ENCODE measurements at regions of chr12 and their contacts with region 1.

Region 1: GRCh38 chr12:98516184-98516873 is 939 bp downstream of the TMPO start:
- DNase-seq: peak; percentile 94
- ATAC-seq: peak; percentile 76
- H3K4me3 Mint-ChIP-seq: peak overlapping the region; percentile 87
- H3K27ac Mint-ChIP-seq: peak overlapping the region; percentile 96
- H3K4me1 Mint-ChIP-seq: peaks cover 34% of the 10 kb centered on the region
- H3K27me3 Mint-ChIP-seq: no peaks in the 10 kb centered on the region

Region 2: DNA sequence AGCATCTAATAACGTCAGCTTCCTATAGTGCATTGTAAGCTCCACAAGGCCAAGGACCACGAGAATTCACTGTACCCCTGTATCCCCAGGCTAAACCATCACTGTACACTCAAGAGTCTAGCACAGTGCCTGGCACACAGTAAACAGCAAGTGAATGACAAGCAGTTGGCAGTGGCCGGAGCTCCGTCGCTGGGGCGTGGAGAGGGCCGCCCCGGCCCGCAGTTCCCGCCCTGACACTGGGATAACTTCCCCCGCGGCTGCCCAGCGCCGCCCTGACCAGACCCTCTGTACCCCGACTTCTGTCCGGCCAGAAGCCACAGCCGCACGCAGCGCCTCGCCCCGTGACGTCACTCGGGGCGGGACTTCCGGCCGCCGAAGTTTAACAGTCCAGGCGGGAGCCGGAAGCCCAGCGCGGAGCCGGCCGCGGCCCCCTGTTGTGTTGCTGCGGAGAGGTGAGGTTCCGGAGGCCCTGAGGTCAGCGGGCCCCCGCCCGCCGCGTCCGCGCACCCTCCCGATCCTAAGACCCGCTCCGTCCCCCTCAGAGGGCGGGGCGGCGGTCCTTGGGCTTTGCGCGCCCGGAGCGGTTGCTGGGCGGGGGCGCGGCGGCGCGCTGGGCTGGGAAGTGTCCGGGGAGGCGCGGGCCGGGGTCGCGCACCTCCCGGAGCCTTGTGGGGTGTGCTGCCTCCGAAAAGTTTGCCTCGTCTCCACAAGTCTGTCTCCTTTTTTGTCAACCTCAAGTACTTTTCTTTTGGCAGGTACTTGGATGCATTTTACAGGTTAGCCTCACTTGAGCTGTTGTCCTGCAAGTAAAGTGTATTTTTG is 1609.3 kb before region 1 on chr12 and contains the start of gene NEDD1:
- CTCF ChIA-PET with region 1: no interaction called
- POLR2A ChIA-PET with region 1: no interaction called
- intact Hi-C with region 1: loop called in 1 of 2 experiments (anchors 5 kb)
- DNase-seq: peak; percentile 89
- ATAC-seq: peak; percentile 84
- H3K4me3 Mint-ChIP-seq: peak within 1 kb of the TSS; percentile 84
- H3K27ac Mint-ChIP-seq: peak within 1 kb of the TSS; percentile 97
- H3K4me1 Mint-ChIP-seq: peaks cover 38% of the 10 kb centered on the region
- H3K27me3 Mint-ChIP-seq: no peaks in the 10 kb centered on the region
- total RNA-seq, gene NEDD1: 57.9 to 69.3 TPM

Region 3: GRCh38 chr12:98424726-98425401 is 91.5 kb before region 1 on chr12:
- CTCF ChIA-PET with region 1: interaction called, 4 read pairs
- POLR2A ChIA-PET with region 1: no interaction called
- intact Hi-C with region 1: loop called (anchors 1 to 2 kb)
- DNase-seq: peak; percentile 75
- ATAC-seq: peak; percentile 88
- H3K4me3 Mint-ChIP-seq: no peak overlapping the region
- H3K27ac Mint-ChIP-seq: no peak overlapping the region
- H3K4me1 Mint-ChIP-seq: no peaks in the 10 kb centered on the region
- H3K27me3 Mint-ChIP-seq: peaks cover 1% of the 10 kb centered on the region

Region 4: GRCh38 chr12:98503592-98504367 is 12.5 kb before region 1 on chr12:
- CTCF ChIA-PET with region 1: interaction called, 9 read pairs
- POLR2A ChIA-PET with region 1: interaction called, 19 read pairs
- intact Hi-C with region 1: loop called (anchors 1 kb)
- DNase-seq: peak; percentile 98
- ATAC-seq: peak; percentile 85
- H3K4me3 Mint-ChIP-seq: peak overlapping the region; percentile 84
- H3K27ac Mint-ChIP-seq: peak overlapping the region; percentile 99
- H3K4me1 Mint-ChIP-seq: peaks cover 37% of the 10 kb centered on the region
- H3K27me3 Mint-ChIP-seq: peaks cover 2% of the 10 kb centered on the region

Region 5: DNA sequence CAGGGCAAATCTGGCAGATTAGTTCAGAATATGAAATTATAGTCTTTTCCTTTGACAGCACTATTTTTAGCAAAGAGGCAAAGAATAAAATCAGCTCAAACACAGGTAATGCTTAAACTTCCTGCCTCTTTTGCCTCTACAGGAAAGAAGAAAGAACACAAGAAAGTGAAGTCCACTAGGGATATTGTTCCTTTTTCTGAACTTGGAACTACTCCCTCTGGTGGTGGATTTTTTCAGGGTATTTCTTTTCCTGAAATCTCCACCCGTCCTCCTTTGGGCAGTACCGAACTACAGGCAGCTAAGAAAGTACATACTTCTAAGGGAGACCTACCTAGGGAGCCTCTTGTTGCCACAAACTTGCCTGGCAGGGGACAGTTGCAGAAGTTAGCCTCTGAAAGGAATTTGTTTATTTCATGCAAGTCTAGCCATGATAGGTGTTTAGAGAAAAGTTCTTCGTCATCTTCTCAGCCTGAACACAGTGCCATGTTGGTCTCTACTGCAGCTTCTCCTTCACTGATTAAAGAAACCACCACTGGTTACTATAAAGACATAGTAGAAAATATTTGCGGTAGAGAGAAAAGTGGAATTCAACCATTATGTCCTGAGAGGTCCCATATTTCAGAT is 16.5 kb after region 1 on chr12:
- CTCF ChIA-PET with region 1: interaction called, 50 read pairs
- POLR2A ChIA-PET with region 1: interaction called, 9 read pairs
- intact Hi-C with region 1: no loop called
- DNase-seq: no peak
- ATAC-seq: peak; percentile 61
- H3K4me3 Mint-ChIP-seq: no peak overlapping the region
- H3K27ac Mint-ChIP-seq: no peak overlapping the region
- H3K4me1 Mint-ChIP-seq: peaks cover 5% of the 10 kb centered on the region
- H3K27me3 Mint-ChIP-seq: no peaks in the 10 kb centered on the region

Region 6: GRCh38 chr12:98578821-98579220 is 62.5 kb after region 1 on chr12:
- CTCF ChIA-PET with region 1: no interaction called
- POLR2A ChIA-PET with region 1: no interaction called
- intact Hi-C with region 1: no loop called
- DNase-seq: no peak
- ATAC-seq: peak; percentile 44
- H3K4me3 Mint-ChIP-seq: no peak overlapping the region
- H3K27ac Mint-ChIP-seq: no peak overlapping the region
- H3K4me1 Mint-ChIP-seq: no peaks in the 10 kb centered on the region
- H3K27me3 Mint-ChIP-seq: peaks cover 2% of the 10 kb centered on the region

Region 7: GRCh38 chr12:98644711-98645402 is 128.5 kb after region 1 on chr12 and contains the starts of genes APAF1 and IKBIP:
- CTCF ChIA-PET with region 1: interaction called, 12 read pairs
- POLR2A ChIA-PET with region 1: interaction called, 3 read pairs
- intact Hi-C with region 1: loop called (anchors 1 to 2 kb)
- DNase-seq: peak; percentile 98
- ATAC-seq: peak; percentile 92
- H3K4me3 Mint-ChIP-seq: peak within 1 kb of the TSS; percentile 91
- H3K27ac Mint-ChIP-seq: peak within 1 kb of the TSS; percentile 94
- H3K4me1 Mint-ChIP-seq: peaks cover 16% of the 10 kb centered on the region
- H3K27me3 Mint-ChIP-seq: no peaks in the 10 kb centered on the region
- total RNA-seq, gene APAF1: 16.5 to 17.4 TPM
- total RNA-seq, gene IKBIP: 20.1 to 27.0 TPM